Activated T-helper 2 cell treated with anti-CD3 and anti-CD28 coated beads, Interferon-gamma antibody, Interleukin-2, Interleukin-4, amounts not matched to agents 10 μg/mL and 5 μg/mL and 100 μg/mL, durations not matched to agents 14 hours and 24 hours and 36 hours (primary cell): ENCODE measurements at regions of chr22 and their contacts with region 1.

Region 1: GRCh38 chr22:39932918-39933649 is 27.1 kb upstream of the TMA7B start:
- DNase-seq: peak; percentile 54
- H3K4me3 Mint-ChIP-seq: peak overlapping the region; percentile 75
- H3K27ac Mint-ChIP-seq: peak overlapping the region; percentile 89
- H3K4me1 Mint-ChIP-seq: peaks cover 52% of the 10 kb centered on the region
- H3K27me3 Mint-ChIP-seq: no peaks in the 10 kb centered on the region

Region 2: GRCh38 chr22:39873965-39874364 is 59.1 kb before region 1 on chr22:
- intact Hi-C with region 1: no loop called
- DNase-seq: no peak
- H3K4me3 Mint-ChIP-seq: no peak overlapping the region
- H3K27ac Mint-ChIP-seq: no peak overlapping the region
- H3K4me1 Mint-ChIP-seq: peaks cover 16% of the 10 kb centered on the region
- H3K27me3 Mint-ChIP-seq: peaks cover 8% of the 10 kb centered on the region

Region 3: DNA sequence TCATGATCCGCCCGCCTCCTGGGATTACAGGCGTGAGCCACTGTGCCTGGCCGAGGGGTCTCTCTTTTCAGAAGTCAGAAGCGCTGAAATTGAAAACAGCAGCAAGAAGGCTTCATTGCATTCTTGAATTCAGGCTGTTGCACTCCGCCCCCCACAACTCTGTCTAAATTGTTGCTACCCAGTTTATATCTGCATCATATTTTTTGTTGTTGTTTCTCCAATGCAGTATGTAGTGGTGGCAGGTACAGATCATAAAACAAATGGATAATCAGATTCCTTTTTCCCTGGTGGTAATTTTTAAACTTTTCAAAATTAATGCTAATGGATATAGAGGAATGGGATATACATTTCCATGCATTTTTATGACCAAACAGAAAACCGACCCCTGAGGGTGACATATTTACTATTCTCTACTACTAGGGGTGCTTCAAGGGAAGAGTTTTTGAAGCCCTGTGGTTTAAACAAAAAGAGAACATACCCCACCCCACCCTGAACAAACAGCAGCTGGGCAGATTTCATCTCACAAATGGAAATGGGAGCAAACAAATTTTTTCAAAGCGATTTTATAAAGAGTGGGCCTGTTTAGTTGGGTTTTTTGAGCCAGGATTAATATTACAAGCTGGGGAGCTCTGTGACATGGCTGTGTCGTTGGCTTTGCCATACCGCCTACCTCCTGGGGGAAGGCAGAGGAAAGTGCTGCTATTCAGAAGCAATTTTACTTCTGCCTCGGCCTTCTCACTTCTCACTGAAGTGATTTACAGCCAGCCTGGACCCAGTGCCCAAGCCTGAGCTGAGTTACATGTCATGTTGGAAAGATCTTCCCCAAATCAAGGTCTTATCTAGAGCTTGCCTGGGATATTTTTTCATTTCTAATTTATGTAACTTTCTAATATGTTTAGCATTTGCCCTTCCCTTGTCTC is 11.1 kb after region 1 on chr22:
- intact Hi-C with region 1: loop called (anchors 2 kb)
- DNase-seq: no peak
- H3K4me3 Mint-ChIP-seq: peak overlapping the region; percentile 21
- H3K27ac Mint-ChIP-seq: peak overlapping the region; percentile 82
- H3K4me1 Mint-ChIP-seq: peaks cover 80% of the 10 kb centered on the region
- H3K27me3 Mint-ChIP-seq: no peaks in the 10 kb centered on the region

Region 4: DNA sequence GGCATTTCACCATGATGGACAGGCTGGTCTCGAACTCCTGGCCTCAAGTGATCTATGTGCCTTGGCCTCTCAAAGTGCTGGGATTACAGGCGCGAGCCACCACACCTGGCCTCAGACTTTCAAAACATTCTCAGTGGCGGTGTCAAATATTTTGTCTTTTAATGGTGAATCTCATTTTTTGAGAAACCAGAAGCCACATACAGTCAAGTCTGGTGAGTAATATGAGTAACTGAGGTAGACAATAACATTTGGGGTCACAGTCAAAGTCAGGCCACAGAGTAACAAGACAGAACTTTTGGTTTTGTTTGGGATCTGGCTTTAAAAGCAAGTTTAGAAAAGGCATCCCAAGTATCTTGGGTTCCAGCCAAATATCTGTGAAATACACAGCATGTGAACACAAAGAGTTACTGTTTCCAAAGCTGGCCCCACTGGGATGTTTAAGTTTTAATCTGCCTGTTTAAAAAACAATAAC is 21.5 kb after region 1 on chr22:
- intact Hi-C with region 1: loop called (anchors 2 kb)
- DNase-seq: no peak
- H3K4me3 Mint-ChIP-seq: no peak overlapping the region
- H3K27ac Mint-ChIP-seq: no peak overlapping the region
- H3K4me1 Mint-ChIP-seq: peaks cover 84% of the 10 kb centered on the region
- H3K27me3 Mint-ChIP-seq: no peaks in the 10 kb centered on the region

Region 5: DNA sequence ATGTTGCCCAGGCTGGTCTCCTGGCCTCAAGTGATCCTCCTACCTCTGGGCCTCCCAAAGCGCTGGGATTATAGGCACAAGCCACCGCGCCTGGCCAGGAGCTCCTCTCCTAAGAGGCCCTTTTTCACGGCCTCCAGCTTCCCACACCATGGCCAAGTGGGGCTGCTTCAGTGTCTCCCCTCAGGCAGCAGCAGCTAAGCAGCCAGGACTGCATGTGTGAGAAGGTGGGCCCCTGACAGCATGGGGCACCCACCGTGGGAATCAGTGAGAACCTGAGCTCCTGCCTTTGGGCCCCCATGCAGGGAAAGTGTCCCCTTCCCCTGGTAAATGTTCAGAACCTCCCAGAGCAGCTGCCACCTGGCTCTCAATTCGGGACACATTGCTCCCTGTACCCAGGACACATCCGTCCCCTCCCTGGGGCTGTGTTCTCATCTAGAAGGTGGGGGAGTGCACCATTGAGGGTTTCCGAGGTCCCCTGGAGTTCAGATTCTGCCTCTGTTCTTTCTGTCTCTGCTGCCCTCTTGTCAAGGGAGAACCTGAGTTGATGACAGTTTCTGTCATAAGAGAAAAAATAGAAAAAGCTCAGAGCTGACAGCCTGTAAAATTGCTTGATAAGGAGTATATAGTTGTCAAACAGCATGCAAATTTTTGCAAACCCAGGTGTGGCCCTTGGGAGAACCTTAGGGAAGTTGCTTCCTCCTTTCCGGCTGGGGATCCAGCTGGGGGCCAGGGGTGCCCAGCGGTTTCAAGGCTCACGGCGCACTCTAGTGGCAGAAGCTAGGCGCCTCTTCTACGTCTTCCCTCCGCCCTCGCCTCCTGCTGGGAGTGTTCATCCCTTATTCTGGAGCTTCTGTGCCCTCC is 91.3 kb after region 1 on chr22:
- intact Hi-C with region 1: loop called (anchors 5 kb)
- DNase-seq: peak; percentile 43
- H3K4me3 Mint-ChIP-seq: no peak overlapping the region
- H3K27ac Mint-ChIP-seq: no peak overlapping the region
- H3K4me1 Mint-ChIP-seq: no peaks in the 10 kb centered on the region
- H3K27me3 Mint-ChIP-seq: no peaks in the 10 kb centered on the region